Vagina (tissue), 2 donors: ENCODE measurements at regions of chr17 and their contacts with region 1.

Region 1: GRCh38 chr17:38676706-38677504 is 2.1 kb upstream of the EPOP start:
- DNase-seq: no peak
- H3K4me3 ChIP-seq: no peak overlapping the region
- H3K27ac ChIP-seq: no peak overlapping the region
- H3K4me1 ChIP-seq: peaks cover 34% of the 10 kb centered on the region
- H3K27me3 ChIP-seq: peaks cover 22% of the 10 kb centered on the region
- CTCF ChIP-seq: peak; percentile 71 to 98 (median 80)
- POLR2A ChIP-seq: no peak

Region 2: GRCh38 chr17:38735161-38735997 is 58.5 kb after region 1 on chr17:
- intact Hi-C with region 1: loop called (anchors 2 kb)
- DNase-seq: no peak
- H3K4me3 ChIP-seq: no peak overlapping the region
- H3K27ac ChIP-seq: no peak overlapping the region
- H3K4me1 ChIP-seq: peaks cover 40% of the 10 kb centered on the region
- H3K27me3 ChIP-seq: no peaks in the 10 kb centered on the region
- CTCF ChIP-seq: peak; percentile 93 to 97 (median 94)
- POLR2A ChIP-seq: no peak